ENCODE measurements at regions of chr15 and their contacts with region 1.

Region 1: DNA sequence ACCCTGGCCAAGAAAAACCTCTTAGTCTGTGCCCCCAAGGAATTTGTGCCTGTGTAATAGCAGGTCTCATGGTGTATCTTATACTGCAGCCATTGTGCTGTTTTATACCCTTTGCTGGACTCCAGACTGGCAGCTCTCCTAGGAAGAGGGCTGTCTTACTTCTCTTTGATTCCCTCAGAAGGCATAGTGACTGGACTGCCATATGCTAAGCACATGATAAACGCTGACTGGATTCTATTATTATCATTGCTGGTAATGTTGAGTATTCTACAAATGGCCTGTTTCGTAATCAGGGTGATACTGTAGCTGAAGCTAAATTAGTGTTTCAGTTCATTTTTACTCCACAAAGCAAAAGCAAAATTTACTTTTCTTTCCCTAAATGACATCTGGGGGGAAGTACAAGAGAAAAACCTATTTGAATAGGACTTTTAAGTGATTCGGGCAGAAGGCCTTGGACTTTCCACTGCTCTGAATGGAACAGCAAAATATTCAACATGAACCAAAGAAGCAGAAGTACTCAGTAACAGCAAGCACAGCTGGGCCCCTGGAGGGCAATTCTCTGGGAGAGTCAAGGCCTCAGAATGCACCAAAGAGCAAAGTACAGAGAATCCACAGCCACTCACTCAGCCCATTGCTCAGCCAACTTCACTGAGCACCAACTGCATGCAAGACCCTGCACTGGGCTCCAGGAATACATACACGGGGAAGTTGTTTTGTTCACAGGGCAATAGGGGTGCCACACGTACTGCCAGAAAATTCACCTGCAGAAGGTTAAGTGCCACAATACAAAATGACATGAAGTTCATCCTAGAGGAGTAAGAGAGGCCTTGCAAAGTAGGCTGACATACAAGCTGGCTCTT is 7.9 kb upstream of the BCL2A1 start:
- ATAC-seq: peak in 7 of 8 experiments; percentile 34 to 98 (median 68)
- H3K4me3 ChIP-seq: no peak overlapping the region
- H3K27ac ChIP-seq: no peak overlapping the region
- H3K4me1 ChIP-seq: no peaks in the 10 kb centered on the region

Region 2: GRCh38 chr15:79339564-79340314 is 639.1 kb before region 1 on chr15:
- in situ Hi-C with region 1: loop called in 2 of 9 experiments (anchors 25 kb)
- ATAC-seq: peak in 7 of 8 experiments; percentile 32 to 52 (median 42)
- H3K4me3 ChIP-seq: no peak overlapping the region
- H3K27ac ChIP-seq: no peak overlapping the region
- H3K4me1 ChIP-seq: no peaks in the 10 kb centered on the region

Region 3: DNA sequence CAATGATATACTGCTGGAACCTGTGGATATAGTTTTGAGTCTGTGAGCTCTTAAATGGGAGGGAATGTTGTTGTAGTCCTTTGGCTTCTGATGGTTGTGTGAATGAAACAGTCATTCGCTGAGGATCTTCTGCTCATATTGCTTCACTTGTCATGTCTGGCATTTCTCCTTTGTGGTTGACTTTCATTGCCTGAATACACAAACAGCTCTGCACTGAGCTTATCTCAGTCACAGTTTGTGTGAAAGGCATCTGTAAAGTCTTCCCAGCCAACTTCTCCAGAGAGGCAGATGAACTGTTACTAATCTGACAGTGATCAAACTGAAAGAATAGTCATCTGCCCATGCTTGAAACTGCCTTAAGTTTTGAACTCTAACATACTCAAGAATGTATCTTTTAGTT is 608.2 kb before region 1 on chr15:
- in situ Hi-C with region 1: loop called in 1 of 9 experiments (anchors 25 kb)
- ATAC-seq: no peak
- H3K4me3 ChIP-seq: no peak overlapping the region
- H3K27ac ChIP-seq: no peak overlapping the region
- H3K4me1 ChIP-seq: peaks cover 0 to 6% of the 10 kb centered on the region in 2 donors

Region 4: GRCh38 chr15:79896637-79897379 is 82.1 kb before region 1 on chr15 and contains the start of gene MTHFS:
- in situ Hi-C with region 1: loop called in 1 of 9 experiments (anchors 25 kb)
- ATAC-seq: peak; percentile 89 to 96 (median 91)
- H3K4me3 ChIP-seq: peak within 1 kb of the TSS; percentile 47 to 70 (median 53)
- H3K27ac ChIP-seq: peak within 1 kb of the TSS; percentile 83 to 94
- H3K4me1 ChIP-seq: peaks cover 0 to 9% of the 10 kb centered on the region in 2 donors
- total RNA-seq, gene MTHFS: 3.9 to 29.5 (median 6.9) TPM

Measured in motor neuron (in vitro differentiated cells).